Activated B cell treated with CpG ODN at 0.5 μM for 24 hours (primary cell): ENCODE measurements at regions of chr1 and their contacts with region 1.

Region 1: DNA sequence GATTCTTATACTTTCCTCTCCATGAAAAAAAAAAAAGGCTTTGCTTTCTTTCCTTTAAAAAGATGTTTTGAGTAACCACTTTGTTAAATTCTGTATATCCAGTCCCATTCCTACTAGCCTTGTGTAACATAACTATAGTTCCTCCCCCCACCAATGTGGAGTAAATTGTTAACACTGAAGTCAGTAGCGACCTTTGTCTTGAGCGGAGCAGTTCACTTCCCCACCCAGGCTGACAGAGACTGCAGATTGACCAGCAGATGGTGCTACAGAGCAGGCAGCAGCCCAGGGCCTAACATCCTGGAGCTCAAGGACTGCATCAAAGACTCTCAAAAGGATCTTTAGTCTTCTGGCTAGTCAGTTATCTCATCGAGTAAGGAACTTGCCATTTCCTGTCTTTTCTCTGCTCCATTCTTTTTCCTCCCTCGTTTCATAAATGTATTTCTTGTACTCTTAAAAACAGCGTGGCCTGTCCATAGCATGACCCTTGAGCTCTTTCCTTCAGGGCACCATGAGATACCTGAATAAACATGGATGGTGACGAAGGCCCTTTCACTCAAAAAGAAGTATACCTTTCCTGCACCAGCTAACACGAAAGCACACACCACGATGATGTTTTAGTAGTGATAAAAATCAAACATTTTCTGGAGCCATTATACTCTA is 503.5 kb upstream of the PKN2 start:
- DNase-seq: peak; percentile 25
- ATAC-seq: peak; percentile 97
- H3K4me3 Mint-ChIP-seq: no peak overlapping the region
- H3K27ac Mint-ChIP-seq: no peak overlapping the region
- H3K4me1 Mint-ChIP-seq: peaks cover 3% of the 10 kb centered on the region
- H3K27me3 Mint-ChIP-seq: peaks cover 3% of the 10 kb centered on the region
- CTCF ChIP-seq: peak; percentile 56

Region 2: DNA sequence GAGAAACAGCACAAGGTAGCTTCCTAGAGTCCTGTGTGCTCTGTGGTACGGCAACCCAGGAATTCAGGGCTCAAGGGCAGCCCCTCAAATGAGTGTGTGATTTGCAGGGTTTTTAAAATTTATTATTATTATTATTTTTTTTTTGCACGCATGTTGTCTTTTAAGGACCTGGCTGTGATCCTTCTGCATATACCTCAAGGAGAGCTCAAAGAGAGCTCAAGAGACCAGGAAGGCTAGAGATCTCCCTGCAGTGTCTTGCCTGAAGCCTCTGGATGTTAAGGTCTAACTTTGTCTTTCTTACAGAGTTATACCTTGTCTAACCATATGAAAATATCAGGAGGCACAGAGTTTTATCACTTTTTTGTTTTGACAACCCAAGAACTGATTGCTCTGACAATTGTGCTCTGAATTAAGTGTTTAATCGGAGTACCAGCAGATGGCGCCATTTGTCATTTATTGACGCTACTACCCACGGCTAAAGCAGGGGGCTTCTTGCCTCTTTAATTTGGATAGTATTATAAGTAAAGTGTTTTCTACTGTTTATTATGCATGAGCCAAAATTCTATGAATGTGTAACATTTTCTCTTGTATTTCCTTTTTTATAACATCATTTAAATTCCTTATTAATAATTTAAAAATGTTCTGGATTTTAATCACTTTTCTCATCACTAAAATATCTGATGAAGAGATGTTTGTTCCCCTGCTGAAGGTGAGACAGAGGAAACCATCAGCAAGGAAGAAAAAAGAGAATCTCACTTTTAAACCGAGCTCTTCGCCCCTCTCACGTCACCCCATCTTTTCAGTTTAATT is 887.7 kb before region 1 on chr1:
- CTCF ChIA-PET with region 1: interaction called, 5 read pairs
- POLR2A ChIA-PET with region 1: no interaction called
- intact Hi-C with region 1: loop called (anchors 1 kb)
- DNase-seq: no peak
- ATAC-seq: peak; percentile 52
- H3K4me3 Mint-ChIP-seq: no peak overlapping the region
- H3K27ac Mint-ChIP-seq: no peak overlapping the region
- H3K4me1 Mint-ChIP-seq: no peaks in the 10 kb centered on the region
- H3K27me3 Mint-ChIP-seq: peaks cover 2% of the 10 kb centered on the region
- CTCF ChIP-seq: peak; percentile 71

Region 3: GRCh38 chr1:87961992-87962391 is 218.6 kb before region 1 on chr1:
- CTCF ChIA-PET with region 1: no interaction called
- POLR2A ChIA-PET with region 1: no interaction called
- intact Hi-C with region 1: no loop called
- DNase-seq: no peak
- ATAC-seq: no peak
- H3K4me3 Mint-ChIP-seq: no peak overlapping the region
- H3K27ac Mint-ChIP-seq: no peak overlapping the region
- H3K4me1 Mint-ChIP-seq: no peaks in the 10 kb centered on the region
- H3K27me3 Mint-ChIP-seq: peaks cover 2% of the 10 kb centered on the region
- CTCF ChIP-seq: no peak

Region 4: DNA sequence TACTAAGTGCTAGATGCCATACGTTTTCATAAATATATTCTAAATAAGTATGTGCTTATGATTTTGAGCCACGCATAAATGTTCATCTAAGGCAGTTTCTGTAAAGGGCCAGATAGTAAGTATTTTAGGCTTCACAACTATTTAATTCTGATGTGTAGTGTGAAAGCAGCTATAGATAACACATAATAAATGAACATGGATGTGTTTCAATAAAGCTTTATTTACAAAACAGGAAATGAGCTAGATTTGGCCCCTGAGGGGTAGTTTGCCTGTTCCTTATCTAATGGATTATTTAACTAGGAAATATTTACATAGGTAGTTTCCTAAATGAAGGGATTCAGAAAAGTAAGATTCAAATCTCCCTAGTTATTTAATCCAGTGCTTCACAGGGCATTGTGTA is 54.1 kb before region 1 on chr1:
- CTCF ChIA-PET with region 1: no interaction called
- POLR2A ChIA-PET with region 1: no interaction called
- intact Hi-C with region 1: no loop called
- DNase-seq: no peak
- ATAC-seq: no peak
- H3K4me3 Mint-ChIP-seq: no peak overlapping the region
- H3K27ac Mint-ChIP-seq: no peak overlapping the region
- H3K4me1 Mint-ChIP-seq: no peaks in the 10 kb centered on the region
- H3K27me3 Mint-ChIP-seq: peaks cover 3% of the 10 kb centered on the region
- CTCF ChIP-seq: no peak

Region 5: GRCh38 chr1:88224906-88225305 is 44.3 kb after region 1 on chr1:
- CTCF ChIA-PET with region 1: interaction called, 8 read pairs
- POLR2A ChIA-PET with region 1: no interaction called
- intact Hi-C with region 1: loop called (anchors 1 kb)
- DNase-seq: no peak
- ATAC-seq: no peak
- H3K4me3 Mint-ChIP-seq: no peak overlapping the region
- H3K27ac Mint-ChIP-seq: no peak overlapping the region
- H3K4me1 Mint-ChIP-seq: no peaks in the 10 kb centered on the region
- H3K27me3 Mint-ChIP-seq: no peaks in the 10 kb centered on the region
- CTCF ChIP-seq: no peak

Region 6: GRCh38 chr1:88549536-88549935 is 369.0 kb after region 1 on chr1:
- CTCF ChIA-PET with region 1: interaction called, 5 read pairs
- POLR2A ChIA-PET with region 1: no interaction called
- intact Hi-C with region 1: loop called (anchors 2 kb)
- DNase-seq: no peak
- ATAC-seq: no peak
- H3K4me3 Mint-ChIP-seq: no peak overlapping the region
- H3K27ac Mint-ChIP-seq: no peak overlapping the region
- H3K4me1 Mint-ChIP-seq: no peaks in the 10 kb centered on the region
- H3K27me3 Mint-ChIP-seq: peaks cover 3% of the 10 kb centered on the region
- CTCF ChIP-seq: no peak

Region 7: GRCh38 chr1:88877382-88877825 is 696.8 kb after region 1 on chr1:
- CTCF ChIA-PET with region 1: interaction called, 7 read pairs
- POLR2A ChIA-PET with region 1: no interaction called
- intact Hi-C with region 1: loop called (anchors 1 kb)
- DNase-seq: no peak
- ATAC-seq: no peak
- H3K4me3 Mint-ChIP-seq: no peak overlapping the region
- H3K27ac Mint-ChIP-seq: peak overlapping the region; percentile 14
- H3K4me1 Mint-ChIP-seq: peaks cover 24% of the 10 kb centered on the region
- H3K27me3 Mint-ChIP-seq: no peaks in the 10 kb centered on the region
- CTCF ChIP-seq: peak; percentile 51